GM12878 (cell line): ENCODE measurements at regions of chr10 and their contacts with region 1.

Region 1: DNA sequence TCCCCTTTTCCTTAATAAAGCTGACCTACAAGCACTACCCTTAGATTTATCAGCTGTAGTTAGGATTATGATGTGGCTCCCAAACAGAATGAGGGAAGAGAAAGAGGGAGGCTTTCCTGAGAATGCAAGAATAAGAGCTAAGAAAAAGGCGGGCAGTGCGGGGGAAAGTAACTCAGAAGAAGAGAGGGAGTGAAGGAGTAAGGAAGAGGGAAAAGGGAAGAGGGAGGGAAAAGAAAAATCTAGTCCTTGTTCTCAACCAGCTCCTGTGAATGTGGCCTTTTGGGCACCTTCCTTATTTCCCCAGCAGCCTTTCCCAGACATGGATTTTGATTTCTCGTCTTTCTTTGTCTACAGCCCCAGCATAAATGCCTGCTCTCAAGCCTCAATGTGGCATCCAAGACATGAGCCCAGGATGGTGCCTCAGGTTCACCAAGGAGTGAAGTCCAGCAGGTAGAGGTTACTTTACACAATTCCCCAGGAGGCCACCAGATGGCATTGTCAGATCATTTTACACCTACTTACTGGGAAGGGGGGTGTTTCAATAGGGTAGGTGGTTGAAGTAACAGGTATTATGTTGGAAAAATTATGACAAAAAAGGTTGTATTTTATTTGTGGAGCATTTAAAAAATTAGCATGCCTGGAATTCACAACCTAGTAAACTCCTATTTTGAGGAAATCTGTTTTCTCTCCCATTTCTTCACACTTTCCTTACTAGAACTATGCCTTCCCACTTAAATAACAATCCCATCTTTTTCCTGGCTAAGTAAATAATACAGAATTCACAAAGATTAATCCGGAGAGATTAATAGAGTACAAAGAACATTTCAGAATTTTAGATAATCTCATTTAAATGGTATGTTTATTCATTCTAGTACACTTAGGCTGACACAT is 106.5 kb downstream of the HTR7 start:
- DNase-seq: peak; percentile 27
- ATAC-seq: peak; percentile 95
- H3K4me3 ChIP-seq: no peak overlapping the region
- H3K27ac ChIP-seq: no peak overlapping the region
- H3K4me1 ChIP-seq: no peaks in the 10 kb centered on the region
- H3K27me3 ChIP-seq: peaks cover 0 to 4% of the 10 kb centered on the region in 2 experiments; a peak in 1 of 4 replicates
- CTCF ChIP-seq: peak; percentile 75 to 78 (median 76); a peak in 5 of 6 replicates
- EP300 ChIP-seq: no peak
- POLR2A ChIP-seq: no peak
- RAD21 ChIP-seq: peak; percentile 94

Region 2: DNA sequence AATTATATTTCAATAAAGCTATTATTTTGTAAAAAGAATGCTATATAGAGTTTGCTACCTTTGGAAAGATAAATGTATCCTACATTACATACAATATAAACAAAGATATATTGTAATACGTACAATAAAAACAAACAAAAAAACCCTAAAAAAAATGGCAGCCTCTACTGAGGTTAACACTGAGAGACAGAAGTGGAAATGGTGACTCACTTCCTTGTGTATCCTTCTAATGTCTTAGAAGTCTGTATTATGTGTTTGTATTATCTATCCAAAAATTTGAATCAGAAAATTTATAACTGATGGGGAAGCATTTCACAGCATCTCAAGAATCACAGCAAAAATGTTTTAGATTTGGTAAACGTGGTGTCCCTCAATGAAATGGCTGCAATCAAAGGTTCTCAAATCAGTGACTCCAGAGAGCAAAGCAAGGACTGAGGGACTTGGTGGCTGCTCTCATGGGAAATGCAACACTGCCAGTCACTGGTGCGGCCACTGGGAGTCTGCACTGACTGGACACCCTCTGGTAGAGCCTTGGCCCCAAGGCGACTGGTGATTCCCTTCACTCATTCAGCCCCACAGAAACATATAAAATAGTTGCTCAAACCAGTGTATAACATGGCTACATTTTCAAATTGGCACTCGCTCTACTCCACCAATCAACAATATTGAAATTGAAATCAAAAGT is 1160.1 kb before region 1 on chr10:
- CTCF ChIA-PET with region 1: no interaction called
- POLR2A ChIA-PET with region 1: no interaction called
- RAD21 ChIA-PET with region 1: no interaction called
- SMC1A ChIA-PET with region 1: no interaction called
- in situ Hi-C with region 1: no loop called
- intact Hi-C with region 1: no loop called
- DNase-seq: no peak
- ATAC-seq: no peak
- H3K4me3 ChIP-seq: no peak overlapping the region
- H3K27ac ChIP-seq: no peak overlapping the region
- H3K4me1 ChIP-seq: no peaks in the 10 kb centered on the region
- H3K27me3 ChIP-seq: no peaks in the 10 kb centered on the region
- CTCF ChIP-seq: no peak
- EP300 ChIP-seq: no peak
- POLR2A ChIP-seq: no peak
- RAD21 ChIP-seq: no peak

Region 3: GRCh38 chr10:90352288-90352687 is 399.1 kb before region 1 on chr10:
- CTCF ChIA-PET with region 1: no interaction called
- POLR2A ChIA-PET with region 1: no interaction called
- RAD21 ChIA-PET with region 1: no interaction called
- SMC1A ChIA-PET with region 1: no interaction called
- in situ Hi-C with region 1: no loop called
- intact Hi-C with region 1: no loop called
- DNase-seq: no peak
- ATAC-seq: no peak
- H3K4me3 ChIP-seq: no peak overlapping the region
- H3K27ac ChIP-seq: no peak overlapping the region
- H3K4me1 ChIP-seq: no peaks in the 10 kb centered on the region
- H3K27me3 ChIP-seq: no peaks in the 10 kb centered on the region; a peak in 1 of 4 replicates
- CTCF ChIP-seq: no peak
- EP300 ChIP-seq: no peak
- POLR2A ChIP-seq: no peak
- RAD21 ChIP-seq: no peak

Region 4: DNA sequence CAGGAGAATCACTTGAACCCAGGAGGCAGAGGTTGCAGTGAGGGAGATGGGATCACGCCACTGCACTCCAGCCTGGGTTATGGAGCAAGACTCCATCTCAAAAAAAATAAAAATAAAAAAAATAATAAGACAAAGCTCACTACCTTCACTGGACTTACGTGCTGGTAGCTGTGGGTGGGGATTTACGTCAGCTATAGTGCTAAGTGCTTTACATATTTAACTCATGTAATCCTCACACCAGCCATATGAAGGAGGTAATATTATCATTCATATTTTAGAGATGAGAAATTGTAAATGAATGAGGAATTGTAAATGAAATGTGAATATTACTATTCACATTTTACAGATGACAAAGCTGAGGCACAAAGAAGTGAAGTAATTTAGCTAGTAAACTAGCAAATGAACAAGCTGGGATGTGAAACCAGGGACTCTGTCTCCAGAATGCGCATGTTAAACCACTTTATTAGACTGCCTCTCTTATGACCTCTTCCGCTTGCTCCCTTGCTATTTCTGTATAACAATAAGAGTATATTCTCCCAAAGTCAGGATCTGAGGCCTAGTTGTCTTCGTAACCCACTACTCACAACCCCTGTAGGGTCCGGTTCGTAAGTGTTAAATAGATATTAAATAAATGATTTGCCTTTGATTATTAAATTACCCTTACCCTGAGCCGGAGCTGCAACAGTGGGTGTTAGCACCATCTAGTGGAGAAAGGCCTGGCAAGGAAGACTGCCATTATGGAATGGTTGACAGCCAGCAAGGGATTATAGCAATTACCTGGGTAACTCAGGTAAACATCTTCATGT is 36.2 kb after region 1 on chr10:
- CTCF ChIA-PET with region 1: interaction called, 25 read pairs
- POLR2A ChIA-PET with region 1: no interaction called
- RAD21 ChIA-PET with region 1: interaction called, 4 read pairs
- SMC1A ChIA-PET with region 1: interaction called, 10 read pairs
- in situ Hi-C with region 1: no loop called
- intact Hi-C with region 1: loop called (anchors 1 kb)
- DNase-seq: no peak
- ATAC-seq: peak; percentile 78
- H3K4me3 ChIP-seq: no peak overlapping the region
- H3K27ac ChIP-seq: no peak overlapping the region
- H3K4me1 ChIP-seq: no peaks in the 10 kb centered on the region
- H3K27me3 ChIP-seq: 0 out of 4 replicates have a peak, but pooled peaks cover 0 to 1% of the 10 kb centered on the region in 2 experiments
- CTCF ChIP-seq: peak; percentile 65 to 72 (median 67)
- EP300 ChIP-seq: no peak
- POLR2A ChIP-seq: no peak
- RAD21 ChIP-seq: peak; percentile 65

Region 5: DNA sequence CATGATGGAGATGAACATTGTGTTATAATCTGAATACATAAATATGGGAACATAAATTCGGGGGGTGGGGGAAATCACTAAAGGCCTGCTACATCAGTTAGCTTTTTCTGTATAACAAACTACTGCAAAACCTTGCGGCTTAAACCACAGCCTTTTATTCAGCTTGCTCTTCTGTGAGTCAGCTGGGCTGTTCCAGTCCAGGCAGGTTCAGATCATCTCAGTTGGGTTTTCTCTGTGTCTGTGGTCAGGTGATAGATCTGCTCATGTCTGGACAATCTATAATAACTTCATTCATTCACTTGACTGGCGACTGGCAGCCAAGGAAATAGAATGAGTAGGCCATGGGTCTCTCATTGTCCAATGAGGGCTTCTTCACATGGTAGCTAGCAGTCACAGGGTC is 83.0 kb after region 1 on chr10:
- CTCF ChIA-PET with region 1: no interaction called
- POLR2A ChIA-PET with region 1: no interaction called
- RAD21 ChIA-PET with region 1: no interaction called
- SMC1A ChIA-PET with region 1: no interaction called
- in situ Hi-C with region 1: no loop called
- intact Hi-C with region 1: no loop called
- DNase-seq: no peak
- ATAC-seq: no peak
- H3K4me3 ChIP-seq: no peak overlapping the region
- H3K27ac ChIP-seq: no peak overlapping the region
- H3K4me1 ChIP-seq: no peaks in the 10 kb centered on the region
- H3K27me3 ChIP-seq: no peaks in the 10 kb centered on the region
- CTCF ChIP-seq: no peak
- EP300 ChIP-seq: no peak
- POLR2A ChIP-seq: no peak
- RAD21 ChIP-seq: no peak

Region 6: DNA sequence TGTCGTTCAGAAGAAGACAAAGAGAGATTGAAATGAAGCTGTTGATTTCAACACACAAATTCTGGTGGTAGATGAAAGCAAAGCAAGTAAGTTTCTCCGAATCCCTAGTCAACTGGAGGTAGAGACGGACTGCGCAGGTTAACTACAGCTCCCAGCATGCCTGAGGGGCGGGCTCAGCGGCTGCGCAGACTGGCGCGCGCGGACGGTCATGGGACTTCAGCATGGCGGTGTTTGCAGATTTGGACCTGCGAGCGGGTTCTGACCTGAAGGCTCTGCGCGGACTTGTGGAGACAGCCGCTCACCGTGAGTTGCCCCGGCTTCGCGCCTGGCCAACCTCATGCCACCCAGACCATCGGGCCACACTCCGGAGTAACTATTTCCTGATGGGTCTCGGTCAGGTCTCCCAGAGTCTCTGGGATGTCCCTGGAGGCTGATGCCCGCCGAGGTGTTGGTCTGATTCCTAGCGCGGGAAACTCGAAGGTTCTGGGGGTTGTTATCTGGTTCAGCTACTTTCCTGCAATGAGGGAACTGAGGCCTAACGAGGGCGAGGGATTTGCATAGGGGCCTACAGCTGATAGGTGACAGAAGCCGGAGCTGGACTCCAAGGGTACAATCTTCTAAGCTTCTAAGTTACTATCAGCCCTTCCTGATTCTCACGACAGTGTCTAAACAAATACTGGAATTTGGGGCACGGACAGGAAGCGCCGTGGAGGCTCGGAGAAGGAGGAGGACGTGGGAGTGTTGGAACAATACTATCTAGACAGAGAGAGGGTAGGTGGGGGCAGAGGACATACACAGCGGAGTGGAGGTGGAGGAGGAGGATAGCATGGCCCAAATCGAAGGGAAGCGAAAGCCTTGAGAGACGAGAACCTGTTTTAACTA is 120.7 kb after region 1 on chr10 and contains the start of gene RPP30:
- CTCF ChIA-PET with region 1: interaction called, 18 read pairs
- POLR2A ChIA-PET with region 1: no interaction called
- RAD21 ChIA-PET with region 1: interaction called, 5 read pairs
- SMC1A ChIA-PET with region 1: interaction called, 6 read pairs
- in situ Hi-C with region 1: loop called (anchors 5 kb)
- intact Hi-C with region 1: loop called (anchors 2 kb)
- DNase-seq: peak; percentile 46
- ATAC-seq: peak; percentile 99
- H3K4me3 ChIP-seq: peak within 1 kb of the TSS; percentile 87
- H3K27ac ChIP-seq: peak within 1 kb of the TSS; percentile 66
- H3K4me1 ChIP-seq: 0 out of 2 replicates have a peak, but pooled peaks cover 3% of the 10 kb centered on the region
- H3K27me3 ChIP-seq: no peaks in the 10 kb centered on the region; a peak in 1 of 4 replicates
- CTCF ChIP-seq: no peak
- EP300 ChIP-seq: no peak
- POLR2A ChIP-seq: peak; percentile 84
- RAD21 ChIP-seq: no peak
- polyA plus RNA-seq, gene RPP30: 178 to 208 TPM

Region 7: DNA sequence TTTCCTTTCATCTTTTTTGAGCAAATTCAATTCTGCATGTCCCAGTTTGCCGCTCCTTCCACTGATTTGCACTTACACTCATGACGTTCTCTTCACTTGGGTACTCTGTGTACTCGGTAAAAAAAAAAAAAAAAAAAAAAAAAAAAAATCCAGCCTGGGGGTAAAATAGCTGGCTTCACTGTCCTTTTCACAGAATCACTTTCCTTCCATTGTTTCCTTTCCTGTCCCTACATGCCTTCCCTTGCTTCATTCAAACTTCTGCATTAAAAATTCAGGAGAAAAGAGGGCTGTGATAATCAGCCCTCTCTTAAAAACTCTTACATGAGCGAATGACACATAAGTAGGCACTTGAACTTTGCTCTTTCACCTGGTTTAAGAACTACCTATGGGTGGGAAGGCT is 160.8 kb after region 1 on chr10:
- CTCF ChIA-PET with region 1: no interaction called
- POLR2A ChIA-PET with region 1: no interaction called
- RAD21 ChIA-PET with region 1: no interaction called
- SMC1A ChIA-PET with region 1: no interaction called
- in situ Hi-C with region 1: no loop called
- intact Hi-C with region 1: no loop called
- DNase-seq: no peak
- ATAC-seq: no peak
- H3K4me3 ChIP-seq: no peak overlapping the region
- H3K27ac ChIP-seq: no peak overlapping the region
- H3K4me1 ChIP-seq: no peaks in the 10 kb centered on the region
- H3K27me3 ChIP-seq: no peaks in the 10 kb centered on the region
- CTCF ChIP-seq: no peak
- EP300 ChIP-seq: no peak
- POLR2A ChIP-seq: no peak
- RAD21 ChIP-seq: no peak